ENCODE measurements at regions of chr18 and their contacts with region 1.

Region 1: GRCh38 chr18:49628881-49629795 is 67.3 kb downstream of the LIPG start:
- DNase-seq: no peak
- H3K4me3 ChIP-seq: no peak overlapping the region
- H3K27ac ChIP-seq: no peak overlapping the region
- H3K4me1 ChIP-seq: peaks cover 0 to 5% (median 0%) of the 10 kb centered on the region in 4 experiments; a peak in 3 of 7 replicates
- H3K27me3 ChIP-seq: no peaks in the 10 kb centered on the region
- CTCF ChIP-seq: peak; percentile 35 to 53 (median 42)
- EP300 ChIP-seq: no peak
- POLR2A ChIP-seq: no peak
- RAD21 ChIP-seq: peak; percentile 24 to 27; a peak in 2 of 4 replicates

Region 2: GRCh38 chr18:49591271-49591670 is 37.9 kb before region 1 on chr18:
- CTCF ChIA-PET with region 1: no interaction called
- POLR2A ChIA-PET with region 1: no interaction called
- DNase-seq: no peak
- H3K4me3 ChIP-seq: no peak overlapping the region
- H3K27ac ChIP-seq: no peak overlapping the region
- H3K4me1 ChIP-seq: no peaks in the 10 kb centered on the region
- H3K27me3 ChIP-seq: no peaks in the 10 kb centered on the region
- CTCF ChIP-seq: no peak
- EP300 ChIP-seq: no peak
- POLR2A ChIP-seq: no peak
- RAD21 ChIP-seq: no peak

Region 3: DNA sequence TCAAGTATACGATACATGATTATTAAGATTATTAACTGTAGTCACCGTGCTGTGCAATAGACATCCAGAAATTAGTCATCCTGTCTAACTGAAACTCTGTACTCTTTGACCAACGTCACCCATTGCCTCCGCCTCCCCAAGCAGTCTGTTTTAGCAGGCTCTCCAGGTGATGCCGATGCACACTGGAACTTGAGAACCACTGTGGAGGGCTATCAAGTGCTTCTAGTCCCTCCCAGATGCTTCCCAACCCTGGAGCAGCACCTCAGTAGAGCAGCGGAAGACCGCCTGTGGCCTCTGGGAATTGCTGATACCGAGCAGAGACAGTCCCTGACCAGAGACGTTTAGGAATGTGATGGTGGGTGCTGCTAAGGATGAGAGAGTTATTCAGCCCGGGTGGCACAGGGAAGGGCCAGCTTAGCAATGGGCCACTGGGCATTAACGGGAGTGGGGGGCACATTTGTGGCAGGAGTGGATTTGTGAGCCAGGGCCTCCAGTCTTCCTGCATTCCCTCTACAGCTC is 16.6 kb before region 1 on chr18:
- CTCF ChIA-PET with region 1: interaction called, 53 read pairs
- POLR2A ChIA-PET with region 1: interaction called, 3 read pairs
- DNase-seq: peak in 1 of 2 experiments; percentile 56
- H3K4me3 ChIP-seq: no peak overlapping the region; a peak in 1 of 8 replicates
- H3K27ac ChIP-seq: peak overlapping the region; percentile 39; the same call in 1 of the 2 replicates
- H3K4me1 ChIP-seq: peaks cover 10 to 25% (median 21%) of the 10 kb centered on the region in 4 experiments
- H3K27me3 ChIP-seq: peaks cover 0 to 2% (median 0%) of the 10 kb centered on the region in 4 experiments; a peak in 1 of 7 replicates
- CTCF ChIP-seq: no peak
- EP300 ChIP-seq: no peak
- POLR2A ChIP-seq: no peak
- RAD21 ChIP-seq: no peak

Measured in H1 (cell line).